Gastrocnemius medialis (tissue), 4 donors: ENCODE measurements at regions of chr7 and their contacts with region 1.

Region 1: DNA sequence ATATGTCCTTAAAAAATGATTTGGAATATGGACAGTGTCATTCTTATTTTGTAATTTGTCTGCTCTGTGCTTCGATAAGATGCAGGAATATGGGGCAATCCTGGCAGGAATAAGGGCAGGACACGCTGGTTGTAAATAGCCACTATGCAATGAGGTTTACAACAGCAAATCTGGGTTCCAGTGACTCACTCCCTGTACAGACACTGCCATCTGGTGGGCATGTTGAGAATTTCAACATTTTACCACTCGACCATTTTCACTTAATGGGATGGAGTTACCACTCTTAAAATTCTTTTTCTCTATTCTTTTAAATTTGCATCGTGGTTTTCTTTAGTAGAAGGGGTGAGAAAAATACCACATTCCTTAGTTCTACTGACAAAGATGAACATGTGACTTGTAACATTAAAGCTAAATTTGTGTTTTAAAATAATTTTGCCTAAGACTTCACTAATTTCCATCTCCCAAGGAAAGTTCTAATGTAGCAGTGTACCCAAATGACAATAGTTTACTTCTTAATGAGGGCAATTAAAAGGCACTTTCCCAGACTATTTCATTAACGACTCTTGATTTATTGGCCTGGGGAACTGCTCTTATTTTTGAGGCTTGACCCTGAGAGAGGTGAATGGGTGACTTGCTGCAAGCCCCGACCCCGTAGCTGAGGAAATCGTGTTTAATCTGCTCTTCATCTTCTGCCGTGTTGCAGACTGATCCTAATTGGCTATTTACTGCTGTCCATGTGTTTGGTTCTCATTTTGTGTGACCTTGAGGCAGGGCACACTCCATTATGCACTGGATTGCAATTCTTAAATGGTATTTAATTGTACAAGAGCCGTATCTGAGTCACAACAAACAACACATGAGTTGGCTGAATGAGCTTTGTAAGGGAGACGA is 173.6 kb upstream of the IMMP2L start:
- DNase-seq: peak; percentile 49 to 50
- ATAC-seq: peak; percentile 92
- H3K4me3 ChIP-seq: no peak overlapping the region
- H3K27ac ChIP-seq: peak overlapping the region; percentile 30 to 38 (median 35)
- H3K4me1 ChIP-seq: peaks cover 6 to 14% of the 10 kb centered on the region in 2 donors
- H3K27me3 ChIP-seq: no peaks in the 10 kb centered on the region
- CTCF ChIP-seq: peak; percentile 57 to 91 (median 79)
- POLR2A ChIP-seq: no peak

Region 2: DNA sequence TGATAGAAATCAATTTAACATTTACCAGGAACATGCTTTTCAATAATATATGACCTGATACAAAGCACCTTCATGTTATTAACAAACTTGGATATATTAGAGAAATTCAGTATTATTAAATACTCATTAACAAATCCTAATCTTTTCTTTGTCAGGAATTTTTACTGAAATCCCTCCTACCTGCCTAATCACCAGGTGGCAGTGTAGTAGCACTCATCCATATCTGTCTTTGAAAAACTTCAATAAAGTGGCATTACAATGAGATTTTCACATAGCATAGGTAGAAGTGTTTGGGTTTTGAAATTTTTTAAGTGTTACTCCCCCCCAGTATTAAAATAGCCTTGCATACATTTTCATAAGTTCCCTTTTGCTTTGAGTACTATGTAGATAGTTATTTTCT is 1891.5 kb before region 1 on chr7:
- in situ Hi-C with region 1: no loop called
- intact Hi-C with region 1: loop called (anchors 10 kb)
- DNase-seq: no peak
- ATAC-seq: no peak
- H3K4me3 ChIP-seq: no peak overlapping the region
- H3K27ac ChIP-seq: no peak overlapping the region
- H3K4me1 ChIP-seq: no peaks in the 10 kb centered on the region
- H3K27me3 ChIP-seq: no peaks in the 10 kb centered on the region
- CTCF ChIP-seq: no peak
- POLR2A ChIP-seq: no peak

Region 3: DNA sequence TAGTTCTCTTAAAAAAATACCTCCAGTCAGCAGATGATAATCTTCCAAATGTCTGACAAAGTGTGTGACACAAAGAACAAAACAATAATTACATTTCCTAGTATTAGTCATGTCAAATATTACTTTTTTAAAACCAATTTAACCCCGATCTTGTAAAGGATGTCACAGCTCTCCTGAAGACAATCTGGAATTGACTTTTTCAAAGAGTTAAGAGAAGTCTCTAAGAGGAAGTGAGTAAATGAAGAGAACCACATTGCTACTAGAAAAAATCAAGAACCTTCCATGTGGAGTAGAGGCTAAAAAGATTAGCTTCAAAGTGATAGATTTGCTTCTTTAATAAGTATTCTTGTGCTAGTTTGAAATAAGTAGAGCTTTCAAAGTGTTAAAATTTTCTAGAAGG is 44.6 kb after region 1 on chr7:
- in situ Hi-C with region 1: no loop called
- intact Hi-C with region 1: no loop called
- DNase-seq: no peak
- ATAC-seq: no peak
- H3K4me3 ChIP-seq: no peak overlapping the region
- H3K27ac ChIP-seq: no peak overlapping the region
- H3K4me1 ChIP-seq: no peaks in the 10 kb centered on the region
- H3K27me3 ChIP-seq: no peaks in the 10 kb centered on the region
- CTCF ChIP-seq: no peak
- POLR2A ChIP-seq: no peak